Activated CD4-positive, alpha-beta T cell treated with anti-CD3 and anti-CD28 coated beads for 36 hours (primary cell): ENCODE measurements at regions of chr21 and their contacts with region 1.

Region 1: GRCh38 chr21:17925000-17925610 is 105.9 kb upstream of the C21orf91 start:
- DNase-seq: peak; percentile 67
- ATAC-seq: peak; percentile 96
- H3K4me3 Mint-ChIP-seq: no peak overlapping the region
- H3K27ac Mint-ChIP-seq: no peak overlapping the region
- H3K4me1 Mint-ChIP-seq: no peaks in the 10 kb centered on the region
- H3K27me3 Mint-ChIP-seq: no peaks in the 10 kb centered on the region

Region 2: DNA sequence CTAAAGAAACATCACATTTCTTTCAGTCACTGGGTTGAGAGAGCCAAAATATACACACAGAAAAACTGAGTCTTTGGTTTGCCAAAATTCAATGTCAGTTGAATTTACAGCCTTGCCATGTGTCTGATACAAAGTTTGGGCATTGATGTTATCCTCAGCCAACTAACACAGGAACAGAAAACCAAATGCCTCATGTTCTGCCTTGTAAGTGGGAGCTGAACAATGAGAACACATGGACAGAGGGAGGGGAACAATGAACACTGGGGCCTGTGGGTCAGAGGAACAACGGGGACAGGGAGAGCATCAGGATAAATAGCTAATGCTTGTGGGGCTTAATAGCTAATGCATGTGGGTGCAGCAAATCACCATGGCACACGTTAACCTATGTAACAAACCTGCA is 66.4 kb before region 1 on chr21:
- CTCF ChIA-PET with region 1: no interaction called
- POLR2A ChIA-PET with region 1: no interaction called
- intact Hi-C with region 1: no loop called
- DNase-seq: no peak
- ATAC-seq: no peak
- H3K4me3 Mint-ChIP-seq: no peak overlapping the region
- H3K27ac Mint-ChIP-seq: no peak overlapping the region
- H3K4me1 Mint-ChIP-seq: no peaks in the 10 kb centered on the region
- H3K27me3 Mint-ChIP-seq: peaks cover 2% of the 10 kb centered on the region

Region 3: DNA sequence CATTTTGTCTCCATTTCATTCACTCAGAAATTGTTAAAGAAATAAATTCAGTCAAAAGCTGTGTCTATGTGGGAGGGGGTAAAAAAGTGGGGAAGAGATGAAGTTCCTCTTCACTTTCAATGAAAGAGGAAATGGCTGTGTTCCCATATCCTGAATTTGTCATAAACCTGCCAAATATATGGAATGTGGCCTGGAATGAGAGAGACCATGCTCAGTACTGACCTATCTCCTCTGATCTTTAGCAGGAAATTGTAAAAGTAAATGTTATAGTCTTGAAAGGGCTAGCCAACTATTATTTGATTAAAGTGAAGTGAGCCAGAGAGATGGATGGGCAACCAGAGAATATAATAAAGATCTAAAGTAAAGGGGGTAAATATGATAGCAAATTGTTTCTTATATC is 24.3 kb after region 1 on chr21:
- CTCF ChIA-PET with region 1: interaction called, 15 read pairs
- POLR2A ChIA-PET with region 1: no interaction called
- intact Hi-C with region 1: no loop called
- DNase-seq: no peak
- ATAC-seq: no peak
- H3K4me3 Mint-ChIP-seq: no peak overlapping the region
- H3K27ac Mint-ChIP-seq: no peak overlapping the region
- H3K4me1 Mint-ChIP-seq: no peaks in the 10 kb centered on the region
- H3K27me3 Mint-ChIP-seq: no peaks in the 10 kb centered on the region